ENCODE measurements at regions of chr1 and their contacts with region 1.

Region 1: DNA sequence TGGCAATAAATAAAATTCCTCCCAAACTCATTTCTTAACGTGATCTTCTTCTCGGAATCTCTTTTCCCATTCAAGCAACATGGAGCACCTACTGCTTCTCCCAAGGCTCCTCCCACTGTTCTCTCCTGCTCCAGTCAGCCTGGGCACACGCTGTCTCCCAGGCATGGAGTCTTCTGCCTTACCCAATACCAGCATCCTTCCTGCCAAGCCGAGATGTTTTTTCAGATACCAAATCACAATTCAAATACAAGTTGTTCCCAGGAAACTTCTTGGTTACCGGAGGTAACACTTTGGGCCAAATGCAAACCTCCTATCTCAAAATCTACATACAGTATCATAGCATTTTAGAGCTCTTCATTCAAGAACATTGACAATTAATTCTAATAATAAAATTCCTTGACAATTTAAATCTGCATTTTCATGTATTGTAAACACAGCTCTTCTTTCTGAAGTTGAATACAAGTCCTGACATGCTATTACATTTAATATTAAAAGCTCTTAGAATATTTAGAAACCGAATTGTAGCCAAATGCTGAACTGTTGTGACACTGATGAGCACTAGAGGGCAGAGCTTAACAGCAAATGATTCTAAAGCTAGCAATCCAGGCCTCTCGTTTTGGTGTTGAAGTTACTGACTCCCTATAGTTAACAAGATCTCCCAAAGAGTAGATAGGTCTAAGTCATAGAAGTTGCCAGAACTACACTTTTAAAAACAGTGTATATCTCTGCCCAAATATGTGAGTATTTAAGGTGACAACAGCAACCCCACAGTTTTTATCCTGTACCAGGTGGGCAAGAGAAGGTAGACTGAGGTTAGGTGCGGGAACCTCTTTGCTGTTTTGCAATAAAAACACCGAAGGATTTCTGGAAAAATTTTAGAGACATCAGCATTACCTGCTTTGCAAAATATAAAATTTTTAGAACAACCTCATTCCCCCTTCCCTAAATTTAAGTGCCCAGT is 52.3 kb downstream of the BCAR3 start:
- DNase-seq: no peak
- ATAC-seq: peak; percentile 83
- H3K4me3 Mint-ChIP-seq: no peak overlapping the region
- H3K27ac Mint-ChIP-seq: no peak overlapping the region
- H3K4me1 Mint-ChIP-seq: peaks cover 9% of the 10 kb centered on the region
- H3K27me3 Mint-ChIP-seq: no peaks in the 10 kb centered on the region
- CTCF ChIP-seq: peak; percentile 74

Region 2: GRCh38 chr1:93033785-93034184 is 595.6 kb before region 1 on chr1:
- CTCF ChIA-PET with region 1: no interaction called
- POLR2A ChIA-PET with region 1: no interaction called
- intact Hi-C with region 1: no loop called
- DNase-seq: no peak
- ATAC-seq: peak; percentile 85
- H3K4me3 Mint-ChIP-seq: no peak overlapping the region
- H3K27ac Mint-ChIP-seq: peak overlapping the region; percentile 37
- H3K4me1 Mint-ChIP-seq: peaks cover 30% of the 10 kb centered on the region
- H3K27me3 Mint-ChIP-seq: no peaks in the 10 kb centered on the region
- CTCF ChIP-seq: no peak

Region 3: GRCh38 chr1:93437976-93438605 is 191.3 kb before region 1 on chr1:
- CTCF ChIA-PET with region 1: interaction called, 8 read pairs
- POLR2A ChIA-PET with region 1: no interaction called
- intact Hi-C with region 1: loop called (anchors 1 kb)
- DNase-seq: no peak
- ATAC-seq: peak; percentile 76
- H3K4me3 Mint-ChIP-seq: no peak overlapping the region
- H3K27ac Mint-ChIP-seq: no peak overlapping the region
- H3K4me1 Mint-ChIP-seq: peaks cover 3% of the 10 kb centered on the region
- H3K27me3 Mint-ChIP-seq: peaks cover 3% of the 10 kb centered on the region
- CTCF ChIP-seq: no peak

Region 4: DNA sequence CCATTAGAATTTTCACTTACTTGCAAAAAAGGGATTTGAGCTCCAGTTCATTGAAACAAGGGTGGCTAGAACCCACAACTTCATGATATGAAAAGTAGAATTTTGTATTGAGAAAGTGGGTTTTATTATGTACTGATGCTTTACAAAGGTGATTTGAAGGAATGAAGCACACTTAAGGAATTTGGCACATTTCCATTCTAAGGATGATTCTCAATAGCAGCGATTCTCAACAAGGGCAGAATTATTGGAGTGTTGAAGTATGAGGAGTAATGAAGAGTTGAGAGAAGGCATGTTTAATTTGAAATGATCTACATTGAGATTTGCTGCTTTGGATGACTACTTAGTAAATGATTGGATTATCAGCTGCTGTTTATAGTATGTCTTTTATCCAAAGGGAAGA is 126.8 kb before region 1 on chr1:
- CTCF ChIA-PET with region 1: no interaction called
- POLR2A ChIA-PET with region 1: no interaction called
- intact Hi-C with region 1: no loop called
- DNase-seq: no peak
- ATAC-seq: no peak
- H3K4me3 Mint-ChIP-seq: no peak overlapping the region
- H3K27ac Mint-ChIP-seq: no peak overlapping the region
- H3K4me1 Mint-ChIP-seq: no peaks in the 10 kb centered on the region
- H3K27me3 Mint-ChIP-seq: no peaks in the 10 kb centered on the region
- CTCF ChIP-seq: no peak

Region 5: GRCh38 chr1:93615582-93616150 is 13.7 kb before region 1 on chr1:
- CTCF ChIA-PET with region 1: interaction called, 15 read pairs
- POLR2A ChIA-PET with region 1: interaction called, 4 read pairs
- intact Hi-C with region 1: no loop called
- DNase-seq: no peak
- ATAC-seq: peak; percentile 65
- H3K4me3 Mint-ChIP-seq: peak overlapping the region; percentile 32
- H3K27ac Mint-ChIP-seq: peak overlapping the region; percentile 44
- H3K4me1 Mint-ChIP-seq: peaks cover 85% of the 10 kb centered on the region
- H3K27me3 Mint-ChIP-seq: no peaks in the 10 kb centered on the region
- CTCF ChIP-seq: no peak

Region 6: GRCh38 chr1:93734999-93735398 is 105.6 kb after region 1 on chr1:
- CTCF ChIA-PET with region 1: interaction called, 50 read pairs
- POLR2A ChIA-PET with region 1: interaction called, 3 read pairs
- intact Hi-C with region 1: loop called (anchors 1 kb)
- DNase-seq: no peak
- ATAC-seq: peak; percentile 28
- H3K4me3 Mint-ChIP-seq: no peak overlapping the region
- H3K27ac Mint-ChIP-seq: no peak overlapping the region
- H3K4me1 Mint-ChIP-seq: peaks cover 14% of the 10 kb centered on the region
- H3K27me3 Mint-ChIP-seq: no peaks in the 10 kb centered on the region
- CTCF ChIP-seq: no peak

Region 7: GRCh38 chr1:93814059-93814794 is 184.8 kb after region 1 on chr1:
- CTCF ChIA-PET with region 1: interaction called, 458 read pairs
- POLR2A ChIA-PET with region 1: interaction called, 13 read pairs
- intact Hi-C with region 1: loop called (anchors 1 kb)
- DNase-seq: no peak
- ATAC-seq: peak; percentile 97
- H3K4me3 Mint-ChIP-seq: no peak overlapping the region
- H3K27ac Mint-ChIP-seq: no peak overlapping the region
- H3K4me1 Mint-ChIP-seq: peaks cover 16% of the 10 kb centered on the region
- H3K27me3 Mint-ChIP-seq: no peaks in the 10 kb centered on the region
- CTCF ChIP-seq: peak; percentile 55

Region 8: DNA sequence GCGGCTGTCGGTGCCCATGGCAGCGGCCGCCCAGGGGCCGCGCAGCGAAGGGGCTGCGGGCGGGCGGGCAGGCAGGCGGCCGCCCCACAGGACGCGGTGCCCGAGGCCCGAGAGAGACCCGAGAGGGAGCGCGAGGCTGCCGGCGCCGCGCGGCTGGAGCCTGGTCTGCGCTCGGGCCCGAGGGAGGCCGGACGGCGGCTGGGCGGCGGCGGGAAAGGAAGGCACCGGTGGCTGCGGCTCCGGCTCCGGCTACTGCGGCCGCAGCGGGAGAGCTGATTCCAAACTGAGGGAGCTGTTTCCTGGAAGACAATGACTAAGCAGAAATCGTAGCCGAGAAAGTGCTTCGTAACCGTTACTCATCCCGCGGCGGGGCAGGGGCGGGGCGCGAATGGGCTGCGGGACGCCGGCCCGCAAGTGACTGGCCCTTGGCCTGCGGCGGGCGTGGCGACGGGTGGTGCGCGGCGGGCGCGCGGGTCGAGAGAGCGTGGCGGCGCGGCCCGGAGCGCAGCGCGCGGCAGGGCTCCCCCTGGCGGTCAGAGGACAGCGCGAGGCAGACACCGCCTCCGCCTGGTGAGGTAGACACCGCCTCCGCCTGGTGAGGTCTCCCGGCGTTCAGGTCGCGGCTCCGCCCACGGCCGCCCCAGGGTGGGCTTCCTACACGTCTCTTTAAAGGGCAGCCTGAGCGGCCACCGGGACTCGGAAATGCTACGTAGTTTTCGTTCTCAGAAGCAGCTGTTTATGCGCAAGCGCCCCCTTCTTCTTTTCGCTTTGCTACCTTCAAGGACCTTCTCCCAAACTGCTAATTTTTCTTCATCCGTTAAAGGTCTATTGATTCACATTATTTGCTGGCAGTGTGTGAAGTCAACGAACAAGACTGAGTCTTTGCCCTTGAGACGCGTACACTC is 280.0 kb after region 1 on chr1 and contains the start of gene GCLM:
- CTCF ChIA-PET with region 1: no interaction called
- POLR2A ChIA-PET with region 1: no interaction called
- intact Hi-C with region 1: loop called (anchors 1 kb)
- DNase-seq: peak; percentile 95
- ATAC-seq: peak; percentile 92
- H3K4me3 Mint-ChIP-seq: peak within 1 kb of the TSS; percentile 89
- H3K27ac Mint-ChIP-seq: peak within 1 kb of the TSS; percentile 87
- H3K4me1 Mint-ChIP-seq: peaks cover 25% of the 10 kb centered on the region
- H3K27me3 Mint-ChIP-seq: no peaks in the 10 kb centered on the region
- CTCF ChIP-seq: peak; percentile 48
- total RNA-seq, gene GCLM: 8.6 and 9.6 TPM in 2 replicates

Measured in activated B cell treated with CpG ODN at 0.5 μM for 24 hours (primary cell).